ENCODE measurements at regions of chr6 and their contacts with region 1.

Region 1: DNA sequence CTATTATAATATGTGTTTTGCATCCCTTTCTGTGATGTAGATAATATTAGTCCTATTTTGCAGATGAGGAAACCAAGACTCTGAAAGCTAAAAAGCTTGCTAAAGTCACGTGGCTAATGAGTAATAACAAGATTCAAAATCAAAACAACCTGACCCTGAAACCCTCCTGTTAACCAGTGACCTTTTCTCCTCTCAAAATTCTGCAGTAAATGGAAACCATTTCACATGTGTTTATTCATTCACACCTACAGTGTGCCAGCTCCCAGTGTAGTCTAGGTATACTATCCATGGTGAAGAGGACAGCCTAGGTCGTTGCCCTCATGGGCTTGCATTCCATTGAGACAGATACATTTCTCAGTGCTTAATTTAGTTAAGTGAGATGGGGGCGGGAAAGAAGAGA is 30.6 kb upstream of the PHACTR2 start:
- DNase-seq: no peak
- H3K4me3 Mint-ChIP-seq: peak overlapping the region; percentile 12
- H3K27ac Mint-ChIP-seq: peak overlapping the region; percentile 59
- H3K4me1 Mint-ChIP-seq: peaks cover 27% of the 10 kb centered on the region
- H3K27me3 Mint-ChIP-seq: no peaks in the 10 kb centered on the region

Region 2: GRCh38 chr6:143615785-143616184 is 31.4 kb before region 1 on chr6:
- intact Hi-C with region 1: loop called (anchors 1 kb)
- DNase-seq: no peak
- H3K4me3 Mint-ChIP-seq: no peak overlapping the region
- H3K27ac Mint-ChIP-seq: no peak overlapping the region
- H3K4me1 Mint-ChIP-seq: peaks cover 41% of the 10 kb centered on the region
- H3K27me3 Mint-ChIP-seq: peaks cover 1% of the 10 kb centered on the region

Region 3: DNA sequence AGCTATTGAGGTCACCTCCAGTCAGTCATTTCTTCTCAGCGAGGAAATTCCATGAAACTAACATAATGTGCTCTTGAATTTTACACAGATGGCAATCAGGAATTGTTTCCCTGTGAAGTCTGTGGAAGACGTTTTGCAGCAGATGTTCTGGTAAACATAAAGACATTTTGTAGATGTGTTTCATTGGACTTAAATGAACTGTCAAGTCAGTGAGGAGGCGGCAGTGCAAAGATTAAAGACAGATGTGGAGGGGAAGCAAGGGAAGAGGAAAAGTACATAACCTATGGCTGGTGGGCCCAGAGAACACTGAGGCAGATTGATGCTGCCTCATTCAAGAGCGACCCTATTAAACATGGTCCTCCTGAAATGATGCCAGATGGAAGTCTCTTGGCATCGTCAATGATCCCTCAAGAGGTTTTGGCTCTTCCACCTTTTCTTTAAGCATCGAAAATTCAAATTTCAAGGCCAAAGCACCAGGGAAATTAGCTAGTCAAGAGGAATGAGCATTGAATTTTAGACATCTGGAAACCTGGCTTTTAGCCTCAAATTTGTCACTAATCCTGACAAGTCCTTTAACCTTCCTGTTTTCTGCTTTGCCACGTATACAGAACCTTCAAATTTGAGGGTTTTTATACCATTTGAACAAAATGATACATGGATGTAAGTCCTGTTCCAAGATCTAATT is 237.2 kb after region 1 on chr6:
- intact Hi-C with region 1: no loop called
- DNase-seq: no peak
- H3K4me3 Mint-ChIP-seq: no peak overlapping the region
- H3K27ac Mint-ChIP-seq: no peak overlapping the region
- H3K4me1 Mint-ChIP-seq: no peaks in the 10 kb centered on the region
- H3K27me3 Mint-ChIP-seq: peaks cover 8% of the 10 kb centered on the region

Region 4: GRCh38 chr6:144119376-144119775 is 472.2 kb after region 1 on chr6:
- intact Hi-C with region 1: no loop called
- DNase-seq: no peak
- H3K4me3 Mint-ChIP-seq: no peak overlapping the region
- H3K27ac Mint-ChIP-seq: no peak overlapping the region
- H3K4me1 Mint-ChIP-seq: no peaks in the 10 kb centered on the region
- H3K27me3 Mint-ChIP-seq: peaks cover 1% of the 10 kb centered on the region